ENCODE measurements at regions of chr2 and their contacts with region 1.

Region 1: DNA sequence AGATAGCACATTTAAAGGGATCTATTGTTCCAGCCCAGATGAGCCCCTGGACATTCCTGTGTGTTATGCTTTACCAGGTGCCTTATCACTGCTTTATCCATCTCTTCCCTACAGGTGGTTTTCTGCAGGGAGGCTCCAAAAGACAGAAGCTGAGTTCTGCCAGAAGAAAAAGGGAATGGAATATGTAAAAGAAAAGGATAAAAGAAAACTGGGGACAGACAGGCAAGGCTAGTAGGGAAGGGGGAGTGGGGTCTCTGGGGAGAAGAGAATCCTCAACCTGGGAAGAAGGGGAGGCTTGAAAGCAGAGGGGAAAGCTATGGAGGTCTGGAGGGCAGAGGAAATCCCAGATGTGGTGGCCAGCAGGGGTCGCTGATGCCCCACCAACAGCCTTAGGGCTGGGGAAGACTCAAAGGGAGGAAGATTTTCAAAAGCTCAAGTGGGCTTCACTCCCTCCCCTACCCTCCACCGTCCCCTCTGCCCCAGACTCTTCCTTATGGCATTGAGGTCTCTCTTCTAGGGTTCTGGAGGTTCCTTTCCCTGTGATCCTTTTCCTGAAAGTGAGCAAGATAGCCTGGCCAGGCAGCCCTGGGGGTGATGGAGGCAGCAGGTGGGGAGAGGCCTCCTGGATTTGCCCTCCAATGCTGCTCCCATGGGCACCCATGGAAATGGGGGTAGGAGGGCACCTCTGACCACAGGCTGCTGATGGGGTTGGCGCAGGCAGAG is 178.1 kb upstream of the PKDCC start:
- H3K4me3 ChIP-seq: no peak overlapping the region
- H3K27ac ChIP-seq: no peak overlapping the region
- H3K4me1 ChIP-seq: peaks cover 4% of the 10 kb centered on the region
- CTCF ChIP-seq: peak; percentile 87

Region 2: DNA sequence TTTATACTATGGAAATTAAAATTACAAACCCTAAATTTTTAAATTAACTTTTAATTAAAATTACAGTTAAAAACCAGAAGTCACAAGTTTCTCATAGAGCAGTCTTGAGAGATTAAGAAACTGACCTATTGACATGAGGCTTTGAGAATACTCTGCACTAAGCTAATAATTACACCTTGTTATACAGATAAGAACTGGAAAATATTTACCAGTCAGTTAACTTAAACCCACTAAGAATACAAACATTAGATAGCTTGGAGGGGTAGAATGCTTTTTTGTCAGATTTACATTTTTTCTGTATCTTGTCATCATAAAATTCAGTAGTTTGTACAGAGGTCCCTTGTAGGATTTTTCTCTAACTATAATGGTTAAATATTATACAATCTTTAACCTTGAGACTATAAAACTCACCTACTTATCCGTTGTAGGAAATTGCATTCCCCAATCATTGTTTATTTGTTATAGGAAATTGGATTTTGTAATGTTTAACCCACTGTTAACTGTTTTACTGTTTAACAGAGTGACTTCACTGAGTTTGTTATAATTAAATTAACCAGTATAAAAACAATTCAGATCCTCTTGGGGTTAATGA is 41.6 kb before region 1 on chr2:
- CTCF ChIA-PET with region 1: no interaction called
- POLR2A ChIA-PET with region 1: no interaction called
- H3K4me3 ChIP-seq: no peak overlapping the region
- H3K27ac ChIP-seq: no peak overlapping the region
- H3K4me1 ChIP-seq: no peaks in the 10 kb centered on the region
- CTCF ChIP-seq: no peak

Region 3: GRCh38 chr2:41847744-41848441 is 21.8 kb before region 1 on chr2:
- CTCF ChIA-PET with region 1: interaction called, 80 read pairs
- POLR2A ChIA-PET with region 1: no interaction called
- H3K4me3 ChIP-seq: no peak overlapping the region
- H3K27ac ChIP-seq: no peak overlapping the region
- H3K4me1 ChIP-seq: no peaks in the 10 kb centered on the region
- CTCF ChIP-seq: no peak

Region 4: GRCh38 chr2:41853427-41854216 is 16.1 kb before region 1 on chr2:
- CTCF ChIA-PET with region 1: interaction called, 80 read pairs
- POLR2A ChIA-PET with region 1: no interaction called
- H3K4me3 ChIP-seq: no peak overlapping the region
- H3K27ac ChIP-seq: no peak overlapping the region
- H3K4me1 ChIP-seq: no peaks in the 10 kb centered on the region
- CTCF ChIP-seq: peak; percentile 43

Region 5: DNA sequence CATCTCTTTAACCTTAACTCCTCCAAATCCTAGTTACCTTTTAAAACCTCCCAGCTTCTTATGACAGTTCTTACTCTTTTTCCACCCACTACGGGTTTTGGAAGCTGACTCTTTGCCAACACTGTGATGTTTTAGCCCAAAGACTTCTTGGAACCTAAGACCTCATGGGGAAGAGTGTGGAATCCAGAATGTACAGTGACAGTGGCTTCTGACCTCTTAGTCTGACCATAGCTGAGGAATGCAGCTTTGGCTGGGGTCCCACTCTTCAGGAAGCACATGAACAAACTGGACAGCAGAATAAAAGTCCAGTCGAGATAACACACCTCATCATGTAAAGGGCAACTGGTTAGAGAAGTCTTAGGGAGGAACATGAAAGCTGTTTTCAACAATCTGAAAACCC is 17.1 kb after region 1 on chr2:
- CTCF ChIA-PET with region 1: interaction called, 13 read pairs
- POLR2A ChIA-PET with region 1: no interaction called
- H3K4me3 ChIP-seq: no peak overlapping the region
- H3K27ac ChIP-seq: no peak overlapping the region
- H3K4me1 ChIP-seq: no peaks in the 10 kb centered on the region
- CTCF ChIP-seq: no peak

Region 6: GRCh38 chr2:42060718-42061619 is 191.3 kb after region 1 on chr2:
- CTCF ChIA-PET with region 1: interaction called, 11 read pairs
- POLR2A ChIA-PET with region 1: no interaction called
- H3K4me3 ChIP-seq: no peak overlapping the region
- H3K27ac ChIP-seq: no peak overlapping the region
- H3K4me1 ChIP-seq: peaks cover 18% of the 10 kb centered on the region
- CTCF ChIP-seq: no peak

Region 7: DNA sequence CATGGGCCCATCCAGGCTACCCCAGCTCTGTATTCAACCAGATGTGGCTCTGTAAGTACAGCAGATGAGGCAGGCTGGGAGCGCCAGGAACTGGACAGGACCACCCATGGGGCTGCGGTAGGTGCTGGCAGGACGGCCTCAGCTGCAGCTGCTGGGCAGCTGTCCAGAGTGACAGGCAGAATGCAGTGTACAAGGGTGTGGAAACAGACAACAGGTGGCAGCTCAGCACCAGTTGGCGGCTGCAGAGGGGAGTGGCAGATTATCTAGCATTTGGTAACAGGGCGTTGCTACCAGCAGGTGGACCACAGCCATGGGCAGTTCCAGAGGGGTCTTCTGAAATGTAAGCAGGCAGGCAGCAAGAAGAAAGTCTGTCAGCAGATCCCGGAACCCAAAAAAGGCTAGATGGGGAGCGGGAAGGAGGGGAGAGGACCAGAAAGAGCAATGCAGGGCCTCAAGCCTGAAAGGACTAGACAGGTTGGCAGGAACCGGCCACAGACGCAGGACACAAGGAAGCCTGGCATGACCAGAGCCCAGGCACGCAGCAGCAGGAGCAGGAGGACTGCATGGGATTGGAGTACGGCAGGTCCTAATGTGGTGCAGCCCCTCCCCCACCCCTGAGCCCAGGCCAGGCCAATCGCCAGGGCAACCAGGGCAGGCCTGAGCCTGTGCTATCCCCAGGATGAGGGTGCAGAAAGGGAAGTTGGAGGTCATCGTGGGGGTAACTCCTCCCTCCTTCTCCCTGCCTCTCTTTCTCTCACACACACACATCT is 202.8 kb after region 1 on chr2:
- CTCF ChIA-PET with region 1: interaction called, 13 read pairs
- POLR2A ChIA-PET with region 1: no interaction called
- H3K4me3 ChIP-seq: no peak overlapping the region
- H3K27ac ChIP-seq: no peak overlapping the region
- H3K4me1 ChIP-seq: no peaks in the 10 kb centered on the region; the same call in 1 of the 2 replicates
- CTCF ChIP-seq: peak; percentile 24; the same call in 1 of the 2 replicates

Region 8: DNA sequence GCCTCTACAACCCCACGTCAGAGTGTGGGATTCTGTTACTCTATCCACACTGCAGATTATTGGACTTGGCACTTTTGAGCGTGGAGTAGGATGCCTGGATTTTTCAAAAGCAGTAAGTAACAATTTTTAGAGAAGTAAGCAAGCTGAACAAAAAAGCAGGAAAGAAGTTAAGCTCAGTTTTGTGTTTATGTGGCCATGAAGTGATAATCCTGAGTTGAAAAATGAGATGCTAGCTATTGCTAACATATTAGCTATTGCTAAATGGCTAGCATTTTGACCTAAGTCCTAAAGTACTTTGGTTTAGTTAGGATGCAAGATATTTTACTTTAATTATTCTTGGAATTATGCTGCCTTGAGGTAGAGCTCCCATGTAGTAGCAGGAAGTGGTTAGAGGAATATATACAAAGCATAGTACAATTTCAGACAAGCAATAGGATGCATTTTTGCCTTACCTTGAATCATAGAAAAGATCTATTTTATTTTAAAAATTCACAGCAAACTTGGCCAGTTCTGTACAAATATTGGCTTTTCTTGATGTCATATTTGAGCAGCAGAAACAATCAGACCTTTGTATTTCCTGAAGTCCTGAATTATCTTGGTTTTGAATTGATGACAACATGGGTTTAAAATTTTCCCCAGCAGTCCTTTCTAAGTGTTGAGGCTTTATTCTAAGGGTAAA is 416.7 kb after region 1 on chr2:
- CTCF ChIA-PET with region 1: no interaction called
- POLR2A ChIA-PET with region 1: no interaction called
- H3K4me3 ChIP-seq: no peak overlapping the region
- H3K27ac ChIP-seq: no peak overlapping the region
- H3K4me1 ChIP-seq: no peaks in the 10 kb centered on the region
- CTCF ChIP-seq: no peak